ENCODE measurements at regions of chr1 and their contacts with region 1.

Region 1: DNA sequence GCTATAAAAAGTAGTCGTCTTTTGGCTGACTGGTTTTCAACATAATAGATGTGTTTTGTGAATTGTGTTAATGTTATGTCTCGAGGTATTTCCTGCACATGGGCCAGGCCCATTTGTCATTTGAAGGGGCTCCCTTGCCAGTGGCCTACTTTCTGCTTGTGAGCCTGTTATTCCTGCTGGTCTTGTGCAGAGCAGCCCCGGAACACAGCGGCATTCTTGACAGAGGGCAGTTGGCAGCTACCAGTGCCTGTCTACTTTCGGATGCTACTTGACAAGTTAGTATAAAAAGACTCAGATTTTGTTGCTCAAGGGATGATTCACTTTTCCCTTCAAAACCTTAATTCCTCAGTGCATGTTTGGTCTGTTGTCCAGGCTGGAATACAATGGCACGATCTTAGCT is 28.5 kb downstream of the PGM1 start:
- DNase-seq: no peak
- H3K4me3 Mint-ChIP-seq: no peak overlapping the region
- H3K27ac Mint-ChIP-seq: no peak overlapping the region
- H3K4me1 Mint-ChIP-seq: no peaks in the 10 kb centered on the region
- H3K27me3 Mint-ChIP-seq: no peaks in the 10 kb centered on the region

Region 2: DNA sequence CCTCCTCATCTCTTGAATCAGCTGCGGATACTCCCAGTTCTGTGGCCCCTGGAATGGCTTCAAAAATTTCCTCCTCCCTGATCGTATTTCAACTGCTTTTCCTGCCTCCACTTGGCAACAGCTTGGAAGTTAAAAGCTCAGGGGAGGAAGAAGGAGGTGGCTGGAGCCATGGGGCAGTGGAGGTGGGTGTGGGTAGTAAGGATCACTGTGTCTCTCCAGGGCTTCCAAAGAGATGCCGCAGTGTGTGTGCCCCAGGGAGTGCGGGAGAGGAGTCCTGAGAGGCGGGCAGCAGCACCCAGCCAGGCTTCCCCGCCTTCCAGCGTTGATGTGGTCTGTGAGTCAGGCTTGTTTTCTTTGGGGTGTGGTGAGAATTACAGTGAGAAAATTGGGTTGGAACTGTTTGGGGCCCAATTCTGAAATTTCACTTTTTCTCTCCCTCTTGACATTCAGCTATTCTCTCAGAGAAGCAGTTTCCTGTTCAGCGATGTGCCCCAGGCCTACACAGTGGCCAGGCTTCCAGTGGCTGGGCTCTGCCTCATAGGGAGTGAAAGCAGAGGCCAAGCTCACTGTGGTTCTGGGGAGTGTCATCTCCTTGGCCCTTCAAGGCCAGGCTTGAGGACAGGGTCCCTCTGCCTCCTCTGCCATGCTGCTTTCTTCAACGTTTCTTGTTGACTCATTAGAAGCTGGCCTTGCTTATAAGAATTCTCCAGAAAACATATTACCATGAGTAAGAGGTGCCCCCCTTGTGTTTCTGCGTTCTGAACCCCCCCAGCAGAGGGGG is 40.5 kb after region 1 on chr1:
- CTCF ChIA-PET with region 1: no interaction called
- POLR2A ChIA-PET with region 1: no interaction called
- intact Hi-C with region 1: no loop called
- DNase-seq: no peak
- H3K4me3 Mint-ChIP-seq: no peak overlapping the region
- H3K27ac Mint-ChIP-seq: no peak overlapping the region
- H3K4me1 Mint-ChIP-seq: peaks cover 11% of the 10 kb centered on the region
- H3K27me3 Mint-ChIP-seq: no peaks in the 10 kb centered on the region

Region 3: GRCh38 chr1:63917571-63918417 is 296.1 kb after region 1 on chr1:
- CTCF ChIA-PET with region 1: interaction called, 4 read pairs
- POLR2A ChIA-PET with region 1: no interaction called
- intact Hi-C with region 1: loop called (anchors 2 kb)
- DNase-seq: peak; percentile 35
- H3K4me3 Mint-ChIP-seq: no peak overlapping the region
- H3K27ac Mint-ChIP-seq: no peak overlapping the region
- H3K4me1 Mint-ChIP-seq: no peaks in the 10 kb centered on the region
- H3K27me3 Mint-ChIP-seq: peaks cover 1% of the 10 kb centered on the region